Tibial artery (tissue), 4 donors: ENCODE measurements at regions of chr14 and their contacts with region 1.

Region 1: GRCh38 chr14:105086833-105087307 is 21.6 kb upstream of the GPR132 start:
- DNase-seq: peak; percentile 80 to 84
- H3K4me3 ChIP-seq: peak overlapping the region; percentile 43 to 61
- H3K27ac ChIP-seq: peak overlapping the region; percentile 74 to 98
- H3K4me1 ChIP-seq: peaks cover 8 to 55% (median 46%) of the 10 kb centered on the region in 4 donors
- H3K27me3 ChIP-seq: no peaks in the 10 kb centered on the region
- CTCF ChIP-seq: peak; percentile 72 to 75

Region 2: DNA sequence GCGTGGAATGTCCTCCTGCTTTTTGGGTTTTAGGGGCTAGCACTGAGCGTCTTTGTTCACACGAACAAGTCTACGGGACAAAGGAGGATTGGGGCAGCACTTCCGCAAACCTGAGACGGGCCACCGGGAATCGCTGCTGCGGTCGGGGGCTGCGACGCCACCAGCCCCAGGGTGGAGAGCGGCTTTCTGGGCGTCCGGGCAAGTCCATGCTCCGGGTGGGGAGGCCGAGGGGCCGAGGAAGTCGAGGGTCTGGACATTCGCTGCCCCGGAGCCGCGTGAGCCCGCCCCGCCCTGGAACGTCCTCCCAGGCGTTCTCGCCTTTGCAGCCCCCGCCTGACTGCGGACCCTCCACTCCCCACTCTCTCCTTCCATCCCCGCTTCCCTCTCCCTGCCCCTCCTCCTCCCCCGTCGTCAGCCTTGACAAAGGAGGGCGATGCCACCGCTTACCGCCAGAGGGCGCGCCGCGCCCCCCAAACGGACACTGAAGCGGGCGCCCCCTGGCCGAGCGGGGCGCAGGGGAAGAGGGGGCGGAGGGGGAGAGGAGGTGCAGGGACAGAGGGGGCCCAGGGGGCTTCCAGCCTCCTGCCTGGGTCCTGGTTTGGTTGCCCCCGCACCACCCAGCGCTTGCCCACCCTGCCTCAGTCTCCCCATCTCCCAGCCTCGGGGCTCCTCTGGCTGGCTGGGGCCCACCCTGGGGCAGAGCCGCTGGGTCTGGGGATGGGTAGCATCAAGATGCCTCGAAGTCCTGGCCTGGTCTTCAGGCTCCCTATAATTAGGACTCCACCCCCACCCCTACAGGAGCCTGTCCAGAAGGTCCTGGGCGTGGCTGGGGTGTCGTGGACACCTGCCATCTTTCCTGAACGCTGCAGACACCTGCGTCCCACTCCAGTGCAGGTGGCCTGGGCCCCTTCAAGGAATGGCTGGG is 436.6 kb before region 1 on chr14:
- intact Hi-C with region 1: no loop called
- DNase-seq: peak; percentile 51 to 83
- H3K4me3 ChIP-seq: peak overlapping the region; percentile 31 to 51
- H3K27ac ChIP-seq: no peak overlapping the region
- H3K4me1 ChIP-seq: peaks cover 0 to 11% (median 7%) of the 10 kb centered on the region in 4 donors
- H3K27me3 ChIP-seq: peaks cover 0 to 18% of the 10 kb centered on the region in 2 donors
- CTCF ChIP-seq: peak; percentile 91 to 100

Region 3: DNA sequence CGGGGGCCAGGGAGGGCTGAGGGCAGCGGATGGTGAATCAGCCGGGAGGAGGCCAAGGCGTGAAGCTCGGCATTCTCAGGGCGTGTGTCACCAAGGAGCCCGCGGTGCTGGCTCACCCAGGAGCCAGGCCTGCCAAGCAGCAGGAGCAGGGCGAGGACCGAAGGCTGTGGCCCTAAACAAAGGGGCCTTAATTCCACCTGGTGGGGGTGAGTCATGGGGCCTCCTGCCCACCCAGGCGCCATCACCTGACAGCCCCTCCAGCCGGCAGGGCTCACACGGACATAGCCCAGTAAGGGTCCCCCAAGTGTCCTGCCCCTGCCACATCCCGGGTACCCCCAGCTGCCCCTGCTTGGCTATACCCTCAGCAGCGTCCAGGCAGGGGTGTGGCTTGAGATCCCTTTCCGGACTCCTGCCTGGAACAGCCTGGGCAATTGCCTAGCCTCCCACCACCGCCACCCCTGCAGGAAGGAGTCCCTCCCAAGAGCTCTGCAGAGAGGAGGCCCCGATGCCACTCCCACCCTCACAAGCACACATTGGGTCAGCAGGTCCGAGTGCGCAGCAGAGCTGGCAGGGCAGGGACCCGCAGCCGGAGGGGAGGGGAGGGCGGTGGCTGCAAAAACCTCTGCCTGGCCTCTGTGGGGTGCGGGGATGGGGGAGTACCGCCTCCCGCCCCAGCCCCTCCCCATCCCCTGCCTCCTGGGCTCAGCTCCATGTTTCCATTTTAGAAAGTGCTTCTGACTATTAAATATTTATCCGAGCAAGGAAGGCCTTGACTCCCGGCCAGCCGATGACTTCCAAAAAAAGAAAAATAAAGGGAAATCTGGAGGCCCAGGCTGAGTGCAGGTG is 113.3 kb before region 1 on chr14:
- intact Hi-C with region 1: no loop called
- DNase-seq: peak; percentile 93 to 98
- H3K4me3 ChIP-seq: peak overlapping the region; percentile 27 to 35
- H3K27ac ChIP-seq: peak overlapping the region; percentile 93 to 97
- H3K4me1 ChIP-seq: peaks cover 7 to 98% (median 93%) of the 10 kb centered on the region in 4 donors
- H3K27me3 ChIP-seq: no peaks in the 10 kb centered on the region
- CTCF ChIP-seq: peak in 1 of 2 experiments; percentile 5

Region 4: GRCh38 chr14:105168979-105169507 is 82.2 kb after region 1 on chr14:
- intact Hi-C with region 1: loop called (anchors 10 kb)
- DNase-seq: no peak
- H3K4me3 ChIP-seq: peak overlapping the region; percentile 31 to 47
- H3K27ac ChIP-seq: no peak overlapping the region
- H3K4me1 ChIP-seq: peaks cover 0 to 31% (median 31%) of the 10 kb centered on the region in 4 donors
- H3K27me3 ChIP-seq: peaks cover 0 to 55% of the 10 kb centered on the region in 2 donors
- CTCF ChIP-seq: peak in 1 of 2 experiments; percentile 7